H1 (cell line): ENCODE measurements at regions of chr22 and their contacts with region 1.

Region 1: DNA sequence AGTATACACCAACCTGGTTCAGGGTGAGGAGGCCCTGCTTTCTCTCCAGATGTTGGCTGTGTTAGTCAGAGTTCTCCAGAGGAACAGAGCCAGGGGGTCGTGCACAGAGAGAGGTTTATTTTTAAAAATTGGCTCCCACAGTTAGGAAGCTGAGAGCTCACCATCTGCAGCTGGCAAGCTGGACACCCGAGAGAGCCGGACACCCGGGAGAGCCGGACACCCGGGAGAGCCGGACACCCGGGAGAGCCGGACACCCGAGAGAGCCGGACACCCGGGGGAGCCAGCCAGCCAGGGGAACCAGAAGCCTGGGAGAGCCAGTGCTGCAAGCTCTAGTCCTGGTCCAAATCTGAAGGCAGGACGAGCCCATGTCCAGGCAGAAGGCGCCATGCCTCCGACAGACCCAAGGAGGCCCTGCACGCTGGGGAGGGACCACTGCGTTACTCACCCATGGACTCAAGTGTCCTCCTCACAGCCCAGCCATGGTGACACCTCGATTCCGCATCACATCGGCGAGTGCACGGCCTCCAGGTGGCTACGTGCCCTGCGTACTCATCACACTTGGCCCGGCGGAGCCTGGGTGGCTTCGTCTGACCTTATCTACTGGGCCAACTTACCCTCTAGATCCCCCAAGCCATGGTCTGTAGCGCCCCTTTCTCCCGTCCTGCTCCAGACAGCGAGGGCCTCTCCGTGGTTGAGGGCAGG is 99.0 kb downstream of the BRD1 start:
- DNase-seq: no peak
- H3K4me3 ChIP-seq: no peak overlapping the region
- H3K27ac ChIP-seq: no peak overlapping the region
- H3K4me1 ChIP-seq: no peaks in the 10 kb centered on the region; a peak in 1 of 7 replicates
- H3K27me3 ChIP-seq: peaks cover 3 to 20% (median 14%) of the 10 kb centered on the region in 4 experiments; a peak in 5 of 7 replicates
- CTCF ChIP-seq: no peak
- EP300 ChIP-seq: no peak
- POLR2A ChIP-seq: no peak
- RAD21 ChIP-seq: no peak; a peak in 1 of 4 replicates

Region 2: DNA sequence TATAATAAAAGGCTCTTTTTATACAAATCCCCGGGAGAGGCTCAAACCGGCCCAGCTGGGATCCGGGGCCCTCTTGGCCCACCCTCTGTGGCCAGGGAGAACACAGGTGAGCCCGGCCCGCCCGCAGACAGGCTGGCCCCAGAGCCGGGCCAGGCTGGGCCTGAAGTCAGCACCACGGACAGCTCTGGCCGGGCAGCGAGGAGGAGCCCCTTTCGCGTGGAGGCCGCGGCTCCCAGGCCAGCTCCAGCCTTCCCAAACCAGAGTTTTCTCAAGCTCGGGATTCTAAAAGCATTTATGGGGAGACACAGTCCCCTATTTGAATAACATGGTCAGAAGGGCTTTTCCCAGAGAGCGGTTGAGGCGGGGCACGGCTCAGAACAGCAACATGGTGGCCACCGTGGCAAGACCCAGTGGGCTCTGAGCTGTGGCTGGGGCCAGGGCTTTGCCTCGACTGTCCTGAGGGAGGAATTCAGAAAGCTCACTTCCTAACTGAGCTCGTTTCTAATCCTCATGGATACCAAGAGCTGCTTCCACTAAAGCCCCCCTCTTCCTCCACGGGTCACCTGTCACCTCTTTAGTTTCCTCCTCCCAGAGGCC is 16.4 kb before region 1 on chr22:
- CTCF ChIA-PET with region 1: interaction called, 14 read pairs
- POLR2A ChIA-PET with region 1: interaction called, 3 read pairs
- DNase-seq: peak in 1 of 2 experiments; percentile 84
- H3K4me3 ChIP-seq: no peak overlapping the region
- H3K27ac ChIP-seq: no peak overlapping the region
- H3K4me1 ChIP-seq: peaks cover 0 to 5% (median 0%) of the 10 kb centered on the region in 4 experiments; a peak in 2 of 7 replicates
- H3K27me3 ChIP-seq: no peaks in the 10 kb centered on the region; a peak in 2 of 7 replicates
- CTCF ChIP-seq: no peak
- EP300 ChIP-seq: no peak
- POLR2A ChIP-seq: no peak
- RAD21 ChIP-seq: 0 out of 4 replicates have a peak, but pooled peaks of 1 of the 2 experiments have one; percentile 19

Region 3: DNA sequence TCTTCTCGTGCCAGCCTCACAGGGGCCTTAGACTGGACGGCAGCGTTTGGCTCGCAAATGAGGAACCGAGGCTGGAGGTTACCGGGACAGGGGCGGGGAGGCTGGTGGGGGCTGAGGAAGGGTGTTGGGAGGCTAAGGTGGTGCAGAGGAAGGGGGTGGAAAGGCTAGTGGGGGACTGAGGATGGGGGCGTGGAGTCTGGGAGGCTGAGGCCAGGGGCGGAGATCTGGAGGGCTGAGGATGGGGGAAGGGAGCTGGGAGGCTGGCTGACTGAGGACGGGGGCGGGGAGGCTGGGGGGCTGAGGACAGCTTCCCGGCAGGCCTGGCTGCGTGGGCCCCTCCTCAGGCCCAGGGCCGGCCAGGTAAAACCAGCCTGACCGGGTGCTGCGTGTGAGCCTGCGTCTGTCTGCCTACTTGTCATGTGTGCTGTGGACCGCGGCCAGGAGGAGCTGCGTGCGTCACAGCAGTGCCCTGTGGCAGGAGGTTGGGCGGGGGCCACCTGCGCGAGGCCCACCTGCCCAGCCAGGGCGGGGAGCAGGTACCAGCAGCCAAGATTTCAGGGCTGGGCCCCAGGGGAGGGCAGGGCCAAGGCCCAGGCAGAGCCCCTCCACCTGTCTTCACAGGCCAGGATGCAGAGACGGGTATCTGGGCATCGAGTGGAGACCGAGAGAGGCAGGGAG is 222.4 kb after region 1 on chr22:
- CTCF ChIA-PET with region 1: no interaction called
- POLR2A ChIA-PET with region 1: no interaction called
- DNase-seq: no peak
- H3K4me3 ChIP-seq: no peak overlapping the region
- H3K27ac ChIP-seq: no peak overlapping the region
- H3K4me1 ChIP-seq: peaks cover 0 to 32% (median 17%) of the 10 kb centered on the region in 4 experiments; a peak in 5 of 7 replicates
- H3K27me3 ChIP-seq: no peaks in the 10 kb centered on the region
- CTCF ChIP-seq: no peak
- EP300 ChIP-seq: no peak
- POLR2A ChIP-seq: no peak
- RAD21 ChIP-seq: no peak